ENCODE measurements at regions of chr14 and their contacts with region 1.

Region 1: DNA sequence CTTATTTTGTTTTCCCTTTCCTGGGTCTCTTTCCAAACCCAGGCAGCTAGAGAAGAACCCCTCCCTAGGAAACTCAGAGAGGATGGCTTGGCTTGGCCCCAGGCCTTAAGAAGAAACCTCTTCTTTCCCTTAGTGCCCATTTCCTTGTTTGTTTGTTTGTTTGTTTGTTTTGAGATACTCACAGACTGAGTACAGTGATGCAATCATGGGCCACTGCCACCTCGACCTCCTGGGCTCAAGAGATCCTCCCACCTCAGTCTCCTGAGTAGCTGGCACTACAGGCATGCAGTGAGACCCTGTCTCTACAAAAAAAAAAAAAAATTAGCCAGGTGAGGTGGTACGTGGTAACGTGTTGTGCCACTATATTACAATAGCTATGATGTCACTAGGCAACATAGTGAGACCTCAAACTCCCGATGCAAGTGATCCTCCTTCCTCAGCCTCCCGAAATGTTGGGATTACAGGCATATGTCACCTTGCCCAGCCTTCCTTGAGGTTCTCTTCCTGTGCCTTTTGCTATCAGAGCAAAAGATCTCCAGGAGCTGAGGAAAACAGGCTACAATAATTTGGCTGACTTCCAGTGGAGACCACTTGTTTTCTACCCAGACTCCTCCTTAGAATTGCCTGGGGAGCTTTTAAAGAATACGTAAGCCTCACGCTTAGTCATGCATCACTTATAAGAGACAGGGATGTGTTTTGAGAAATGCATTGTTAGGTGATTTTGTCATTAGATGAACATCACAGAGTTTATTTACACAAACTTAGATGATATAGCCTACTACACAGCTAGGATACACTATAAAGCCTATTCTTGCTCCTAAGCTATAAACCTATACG is 34.5 kb upstream of the LGALS3 start:
- DNase-seq: peak; percentile 53
- H3K4me3 ChIP-seq: no peak overlapping the region
- H3K27ac ChIP-seq: no peak overlapping the region
- H3K4me1 ChIP-seq: peaks cover 16% of the 10 kb centered on the region
- H3K27me3 ChIP-seq: no peaks in the 10 kb centered on the region
- CTCF ChIP-seq: no peak

Region 2: GRCh38 chr14:54881235-54881760 is 213.2 kb before region 1 on chr14:
- CTCF ChIA-PET with region 1: interaction called, 15 read pairs
- POLR2A ChIA-PET with region 1: no interaction called
- intact Hi-C with region 1: no loop called
- DNase-seq: no peak
- H3K4me3 ChIP-seq: peak overlapping the region; percentile 21
- H3K27ac ChIP-seq: peak overlapping the region; percentile 19
- H3K4me1 ChIP-seq: no peaks in the 10 kb centered on the region
- H3K27me3 ChIP-seq: no peaks in the 10 kb centered on the region
- CTCF ChIP-seq: no peak

Region 3: GRCh38 chr14:55152052-55152753 is 57.7 kb after region 1 on chr14:
- CTCF ChIA-PET with region 1: interaction called, 10 read pairs
- POLR2A ChIA-PET with region 1: no interaction called
- intact Hi-C with region 1: no loop called
- DNase-seq: no peak
- H3K4me3 ChIP-seq: no peak overlapping the region
- H3K27ac ChIP-seq: no peak overlapping the region
- H3K4me1 ChIP-seq: no peaks in the 10 kb centered on the region
- H3K27me3 ChIP-seq: no peaks in the 10 kb centered on the region
- CTCF ChIP-seq: no peak

Region 4: DNA sequence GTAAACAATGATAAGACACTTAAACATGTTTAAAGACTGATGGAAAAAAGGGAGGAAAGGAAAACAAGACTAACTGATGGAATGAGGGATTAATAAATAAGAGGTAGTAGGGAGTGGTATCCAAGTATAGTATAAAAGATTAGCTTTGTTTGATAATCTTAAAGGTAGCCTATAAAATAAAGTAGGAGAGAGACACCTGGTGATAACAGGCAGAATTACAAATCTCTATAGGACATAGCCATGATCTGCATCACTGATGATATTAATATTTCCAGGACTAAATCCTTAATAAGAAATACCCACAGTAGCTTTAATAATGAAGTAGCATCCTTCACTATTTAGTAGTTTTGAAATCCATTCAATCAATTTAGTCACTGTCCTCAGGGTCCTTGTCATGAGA is 66.5 kb after region 1 on chr14:
- CTCF ChIA-PET with region 1: interaction called, 16 read pairs
- POLR2A ChIA-PET with region 1: no interaction called
- intact Hi-C with region 1: loop called (anchors 1 kb)
- DNase-seq: peak; percentile 48
- H3K4me3 ChIP-seq: no peak overlapping the region
- H3K27ac ChIP-seq: no peak overlapping the region
- H3K4me1 ChIP-seq: no peaks in the 10 kb centered on the region
- H3K27me3 ChIP-seq: no peaks in the 10 kb centered on the region
- CTCF ChIP-seq: peak; percentile 57

Region 5: GRCh38 chr14:55430024-55430690 is 335.6 kb after region 1 on chr14:
- CTCF ChIA-PET with region 1: no interaction called
- POLR2A ChIA-PET with region 1: no interaction called
- intact Hi-C with region 1: loop called (anchors 5 kb)
- DNase-seq: peak; percentile 72
- H3K4me3 ChIP-seq: no peak overlapping the region
- H3K27ac ChIP-seq: no peak overlapping the region
- H3K4me1 ChIP-seq: no peaks in the 10 kb centered on the region
- H3K27me3 ChIP-seq: no peaks in the 10 kb centered on the region
- CTCF ChIP-seq: peak; percentile 58

Region 6: DNA sequence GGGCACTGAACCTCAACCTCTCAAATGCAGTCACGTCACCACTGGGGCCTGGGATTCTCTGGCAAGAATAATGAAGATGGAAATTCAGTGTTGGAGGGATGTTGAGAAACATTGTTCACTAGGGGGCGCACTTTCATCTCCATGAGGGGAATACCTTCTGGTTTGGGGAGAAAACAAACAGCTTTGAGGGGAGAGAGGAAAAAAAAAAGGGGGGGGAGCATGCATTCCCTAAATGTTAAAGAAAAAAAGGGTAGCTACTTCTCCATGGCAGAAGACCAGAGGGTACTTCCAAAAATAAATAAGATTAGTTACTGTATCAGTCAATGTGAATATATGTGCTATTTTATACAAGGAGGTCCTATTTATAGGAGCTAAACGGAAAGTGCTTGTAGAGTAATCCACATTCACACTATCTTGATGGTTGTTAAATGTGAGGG is 351.7 kb after region 1 on chr14:
- CTCF ChIA-PET with region 1: interaction called, 10 read pairs
- POLR2A ChIA-PET with region 1: no interaction called
- intact Hi-C with region 1: no loop called
- DNase-seq: peak; percentile 93
- H3K4me3 ChIP-seq: peak overlapping the region; percentile 23
- H3K27ac ChIP-seq: peak overlapping the region; percentile 21
- H3K4me1 ChIP-seq: peaks cover 26% of the 10 kb centered on the region
- H3K27me3 ChIP-seq: no peaks in the 10 kb centered on the region
- CTCF ChIP-seq: peak; percentile 81

Measured in A673 (cell line).